CD4-positive, alpha-beta T cell (primary cell): ENCODE measurements at regions of chr9 and their contacts with region 1.

Region 1: DNA sequence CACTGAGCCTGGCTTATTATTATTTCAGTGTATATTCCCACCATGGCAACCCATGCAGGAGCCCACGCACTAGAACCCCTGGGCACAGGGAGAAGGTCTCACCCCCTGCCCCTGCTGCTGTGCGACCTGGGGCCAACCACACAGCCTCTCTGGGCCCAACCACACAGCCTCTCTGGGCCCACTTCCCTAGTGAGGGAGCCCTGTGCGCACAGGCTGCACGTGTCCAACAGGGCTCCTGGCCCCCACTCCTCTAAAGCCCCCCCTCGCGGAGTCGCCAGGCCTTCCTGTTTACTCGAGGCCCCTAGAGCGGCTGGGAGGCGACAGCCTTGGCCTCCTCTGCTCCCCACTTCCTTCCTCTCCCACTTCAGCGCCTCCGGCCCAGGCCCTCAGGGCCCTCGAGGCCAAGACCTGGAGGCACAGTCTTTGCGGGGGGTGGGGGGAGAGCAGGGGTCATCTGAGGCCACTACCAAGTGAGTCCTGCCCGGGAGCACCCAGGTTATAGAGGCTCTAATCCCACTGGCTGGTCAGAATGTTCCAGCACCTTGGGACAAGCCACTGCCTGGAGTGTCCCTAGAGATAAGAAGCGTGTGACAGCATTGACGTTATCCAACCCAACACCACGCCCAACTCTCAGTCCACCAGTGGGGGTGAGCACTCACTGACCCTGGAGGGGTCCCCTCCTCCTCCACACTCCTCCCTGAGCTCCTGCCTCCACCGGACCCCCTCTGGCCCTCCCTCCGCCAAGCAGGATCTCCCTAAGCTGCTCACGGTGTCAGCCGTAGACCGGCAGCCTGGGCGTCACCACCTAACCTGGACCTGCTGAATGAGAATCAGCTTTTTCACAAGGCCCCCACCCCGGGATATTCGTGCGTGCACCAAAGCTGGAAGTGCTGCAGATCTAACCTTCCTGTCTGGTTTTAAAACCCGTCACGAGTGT is 7.9 kb upstream of the ENG start:
- DNase-seq: peak in 13 of 14 experiments; percentile 24 to 87 (median 54)
- ATAC-seq: peak; percentile 51
- H3K4me3 ChIP-seq: no peak overlapping the region
- H3K4me3 Mint-ChIP-seq: peak overlapping the region; percentile 39
- H3K27ac ChIP-seq: peak overlapping the region; percentile 67 to 79
- H3K27ac Mint-ChIP-seq: peak overlapping the region; percentile 87
- H3K4me1 ChIP-seq: peaks cover 59% of the 10 kb centered on the region
- H3K4me1 Mint-ChIP-seq: peaks cover 42% of the 10 kb centered on the region
- H3K27me3 ChIP-seq: no peaks in the 10 kb centered on the region
- H3K27me3 Mint-ChIP-seq: no peaks in the 10 kb centered on the region
- CTCF ChIP-seq: no peak

Region 2: DNA sequence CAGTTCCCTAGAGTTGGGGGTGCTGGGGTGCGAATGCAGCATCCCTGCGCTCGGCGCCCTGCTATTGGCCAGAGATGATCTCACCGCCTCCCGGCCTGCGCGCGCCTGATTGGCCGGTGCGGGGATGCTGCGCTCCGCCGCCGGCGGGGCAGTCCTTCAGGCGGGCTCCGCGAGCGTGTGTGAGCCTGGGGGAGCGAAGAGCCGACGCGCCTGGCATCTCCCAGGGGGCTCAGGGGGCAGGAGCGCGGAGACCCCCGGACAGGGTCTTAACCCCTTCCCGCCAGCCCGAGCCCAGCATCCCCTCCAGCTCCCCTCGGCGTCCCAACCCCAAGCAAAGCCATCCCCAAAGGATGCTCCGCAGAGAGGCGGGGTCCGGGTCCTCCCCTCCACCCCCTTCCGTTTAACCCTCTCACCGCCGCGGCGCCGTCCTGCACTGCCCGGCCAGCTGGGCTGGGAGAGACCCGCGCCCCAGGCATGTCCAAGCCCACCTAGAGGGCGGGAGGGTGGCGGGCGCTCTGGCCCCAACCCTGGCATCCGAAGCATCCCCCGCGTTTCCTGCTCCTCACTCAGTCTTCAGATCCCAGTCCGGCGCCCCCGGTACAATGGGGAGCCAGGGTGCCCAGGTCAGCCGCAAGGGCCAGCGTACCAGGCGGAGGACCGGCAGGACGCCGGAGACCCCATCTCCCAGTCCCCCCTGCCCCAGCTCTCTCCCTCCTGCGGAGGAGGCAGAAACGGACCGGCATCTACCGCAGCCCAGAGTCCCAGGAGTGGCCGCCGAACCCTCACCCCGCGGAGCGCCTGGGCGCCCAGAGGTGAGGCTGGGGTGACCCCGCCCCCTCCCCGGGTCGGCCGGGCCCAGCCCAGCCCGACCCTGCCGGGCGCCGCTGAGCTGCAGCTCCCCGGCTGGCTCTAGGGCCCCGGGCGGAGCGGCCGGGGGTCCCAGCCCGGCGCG is 108.0 kb before region 1 on chr9:
- CTCF ChIA-PET with region 1: no interaction called
- POLR2A ChIA-PET with region 1: no interaction called
- intact Hi-C with region 1: no loop called
- DNase-seq: no peak
- ATAC-seq: no peak
- H3K4me3 ChIP-seq: no peak overlapping the region
- H3K4me3 Mint-ChIP-seq: no peak overlapping the region
- H3K27ac ChIP-seq: no peak overlapping the region
- H3K27ac Mint-ChIP-seq: no peak overlapping the region
- H3K4me1 ChIP-seq: peaks cover 9% of the 10 kb centered on the region
- H3K4me1 Mint-ChIP-seq: peaks cover 13% of the 10 kb centered on the region
- H3K27me3 ChIP-seq: no peaks in the 10 kb centered on the region
- H3K27me3 Mint-ChIP-seq: no peaks in the 10 kb centered on the region
- CTCF ChIP-seq: no peak

Region 3: GRCh38 chr9:127899128-127899946 is 37.0 kb after region 1 on chr9 and contains the start of gene ST6GALNAC6:
- CTCF ChIA-PET with region 1: no interaction called
- POLR2A ChIA-PET with region 1: interaction called, 3 read pairs
- intact Hi-C with region 1: loop called in 1 of 2 experiments (anchors 5 kb)
- DNase-seq: peak in 13 of 14 experiments; percentile 32 to 86 (median 61)
- ATAC-seq: peak; percentile 76
- H3K4me3 ChIP-seq: peak within 1 kb of the TSS; percentile 89
- H3K4me3 Mint-ChIP-seq: peak within 1 kb of the TSS; percentile 95
- H3K27ac ChIP-seq: peak within 1 kb of the TSS; percentile 36 to 56
- H3K27ac Mint-ChIP-seq: peak within 1 kb of the TSS; percentile 86
- H3K4me1 ChIP-seq: peaks cover 64% of the 10 kb centered on the region
- H3K4me1 Mint-ChIP-seq: peaks cover 45% of the 10 kb centered on the region
- H3K27me3 ChIP-seq: no peaks in the 10 kb centered on the region
- H3K27me3 Mint-ChIP-seq: no peaks in the 10 kb centered on the region
- CTCF ChIP-seq: no peak
- total RNA-seq, gene ST6GALNAC6: 93.1 to 97.5 TPM

Region 4: GRCh38 chr9:127904561-127905003 is 42.2 kb after region 1 on chr9:
- CTCF ChIA-PET with region 1: interaction called, 4 read pairs
- POLR2A ChIA-PET with region 1: interaction called, 12 read pairs
- intact Hi-C with region 1: loop called in 1 of 2 experiments (anchors 5 kb)
- DNase-seq: peak in 3 of 14 experiments; percentile 37 to 51 (median 40)
- ATAC-seq: no peak
- H3K4me3 ChIP-seq: peak overlapping the region; percentile 63
- H3K4me3 Mint-ChIP-seq: peak overlapping the region; percentile 89
- H3K27ac ChIP-seq: peak overlapping the region; percentile 95 to 98
- H3K27ac Mint-ChIP-seq: peak overlapping the region; percentile 98
- H3K4me1 ChIP-seq: peaks cover 66% of the 10 kb centered on the region
- H3K4me1 Mint-ChIP-seq: peaks cover 61% of the 10 kb centered on the region
- H3K27me3 ChIP-seq: no peaks in the 10 kb centered on the region
- H3K27me3 Mint-ChIP-seq: no peaks in the 10 kb centered on the region
- CTCF ChIP-seq: no peak

Region 5: GRCh38 chr9:128149001-128149701 is 286.8 kb after region 1 on chr9 and contains the start of gene LCN2:
- CTCF ChIA-PET with region 1: no interaction called
- POLR2A ChIA-PET with region 1: no interaction called
- intact Hi-C with region 1: no loop called
- DNase-seq: no peak
- ATAC-seq: no peak
- H3K4me3 ChIP-seq: no peak within 1 kb of the TSS
- H3K4me3 Mint-ChIP-seq: no peak within 1 kb of the TSS
- H3K27ac ChIP-seq: no peak within 1 kb of the TSS
- H3K27ac Mint-ChIP-seq: no peak within 1 kb of the TSS
- H3K4me1 ChIP-seq: no peaks in the 10 kb centered on the region
- H3K4me1 Mint-ChIP-seq: no peaks in the 10 kb centered on the region
- H3K27me3 ChIP-seq: no peaks in the 10 kb centered on the region
- H3K27me3 Mint-ChIP-seq: no peaks in the 10 kb centered on the region
- CTCF ChIP-seq: no peak
- total RNA-seq, gene LCN2: not detected